Cardiac septum (tissue), 1 donor: ENCODE measurements at regions of chr6 and their contacts with region 1.

Region 1: GRCh38 chr6:118968416-118968815 is 33.5 kb upstream of the MCM9 start:
- DNase-seq: no peak

Region 2: DNA sequence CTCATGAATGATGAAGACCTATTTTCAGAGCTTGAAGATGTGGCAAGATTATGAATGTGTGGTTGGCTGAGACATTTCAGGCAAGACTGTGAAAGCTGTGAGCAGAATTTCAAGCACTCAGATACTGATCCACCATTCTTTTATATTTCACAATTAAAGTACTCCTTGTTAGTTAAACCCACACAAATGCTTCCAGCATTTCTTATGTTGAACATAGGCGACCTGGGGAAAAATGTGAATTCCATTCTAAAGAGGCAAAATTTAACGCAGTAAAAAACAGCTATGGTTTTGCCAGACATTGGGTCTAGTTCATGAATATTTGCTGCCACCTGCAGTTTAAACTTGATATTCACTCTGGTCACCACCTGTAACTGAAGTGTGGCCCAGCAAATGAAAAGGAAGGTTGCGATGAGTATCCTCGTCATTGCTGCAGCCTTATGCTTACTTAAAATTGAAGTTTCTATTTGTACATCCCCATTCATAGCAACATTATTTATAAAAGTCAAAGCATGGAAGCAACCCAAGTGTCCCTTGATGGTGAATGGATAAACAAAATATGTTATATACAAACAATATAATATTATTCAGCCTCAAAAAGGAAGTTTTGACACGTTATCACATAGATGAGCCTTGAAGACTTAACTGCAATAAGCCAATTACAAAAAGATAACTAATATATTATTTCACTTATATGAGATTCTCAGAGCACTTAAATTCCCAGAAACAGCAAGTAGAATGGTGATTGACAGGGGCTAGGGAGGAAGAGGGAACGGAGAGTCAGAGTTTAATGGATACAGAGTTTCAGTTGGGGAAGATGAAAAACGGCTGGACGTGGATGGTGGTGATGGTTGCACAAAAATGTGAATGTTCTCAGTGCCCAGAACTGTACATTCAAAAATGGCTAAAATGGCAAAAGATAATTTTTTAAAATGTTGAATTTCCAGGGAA is 142.5 kb after region 1 on chr6:
- intact Hi-C with region 1: loop called (anchors 5 kb)
- DNase-seq: no peak